ENCODE measurements at regions of chr2 and their contacts with region 1.

Region 1: GRCh38 chr2:230924470-230925341 is at the start of gene GPR55:
- DNase-seq: peak; percentile 24
- H3K4me3 Mint-ChIP-seq: peak within 1 kb of the TSS; percentile 62
- H3K27ac Mint-ChIP-seq: peak within 1 kb of the TSS; percentile 84
- H3K4me1 Mint-ChIP-seq: peaks cover 58% of the 10 kb centered on the region
- H3K27me3 Mint-ChIP-seq: peaks cover 37% of the 10 kb centered on the region
- total RNA-seq, gene GPR55: 0.13 and 0.29 TPM in 2 replicates

Region 2: DNA sequence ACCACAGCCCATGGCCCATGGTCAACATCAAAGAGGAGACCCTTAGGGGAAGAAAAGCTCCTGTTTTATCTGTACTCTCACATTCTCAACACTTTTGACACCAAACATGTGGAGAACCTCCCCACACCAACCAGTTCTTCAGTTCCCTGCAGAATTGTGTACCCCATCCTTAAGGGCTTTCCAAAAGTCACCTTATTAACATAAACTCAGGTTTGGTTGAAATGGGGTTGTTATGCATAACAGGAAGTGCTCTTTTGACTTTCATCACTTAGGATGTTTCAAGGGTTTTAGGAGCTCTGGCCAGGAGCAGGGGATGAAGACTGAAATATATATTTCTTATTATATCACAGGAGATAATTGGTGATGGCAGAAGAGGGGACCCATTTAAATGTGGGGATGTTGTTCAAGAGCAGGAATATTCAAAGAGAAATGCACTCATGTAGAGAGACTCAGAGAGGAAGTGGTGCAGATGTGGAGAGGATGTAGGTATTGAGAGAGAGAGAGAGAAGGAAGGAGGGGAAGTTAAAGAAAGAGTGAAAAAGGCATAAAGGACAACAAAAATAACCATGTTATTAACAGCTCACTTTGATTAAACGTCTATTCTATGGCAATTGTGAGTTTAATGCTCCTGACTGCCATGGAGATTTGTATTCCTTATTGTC is 562.5 kb before region 1 on chr2:
- intact Hi-C with region 1: no loop called
- DNase-seq: no peak
- H3K4me3 Mint-ChIP-seq: peak overlapping the region; percentile 5
- H3K27ac Mint-ChIP-seq: peak overlapping the region; percentile 73
- H3K4me1 Mint-ChIP-seq: peaks cover 29% of the 10 kb centered on the region
- H3K27me3 Mint-ChIP-seq: no peaks in the 10 kb centered on the region

Region 3: DNA sequence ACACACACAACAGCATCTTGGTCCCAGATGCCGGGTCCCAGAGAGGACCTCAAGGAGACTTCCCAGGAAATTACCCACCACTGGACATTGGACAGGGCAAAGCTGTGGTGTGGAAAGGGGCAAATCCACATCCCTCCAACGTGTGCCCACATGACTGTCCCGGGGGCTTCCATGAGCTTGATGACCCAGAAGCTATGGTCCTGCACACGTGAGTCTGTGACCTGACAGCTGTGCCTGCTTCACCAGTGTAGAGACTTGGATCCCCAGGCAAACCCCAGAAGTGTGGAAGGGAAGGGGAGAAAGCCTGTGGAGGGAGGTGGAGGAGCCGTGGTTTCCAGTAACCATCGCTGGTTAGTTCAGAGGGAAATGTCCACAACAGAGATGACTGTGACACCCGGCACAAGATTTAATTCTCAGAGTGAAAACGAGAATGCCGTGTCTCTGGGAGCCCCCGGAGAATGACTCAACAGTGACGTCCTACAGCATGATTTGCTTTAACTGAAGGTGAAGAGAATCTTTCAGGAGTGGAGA is 19.5 kb after region 1 on chr2:
- intact Hi-C with region 1: loop called (anchors 2 kb)
- DNase-seq: no peak
- H3K4me3 Mint-ChIP-seq: no peak overlapping the region
- H3K27ac Mint-ChIP-seq: no peak overlapping the region
- H3K4me1 Mint-ChIP-seq: peaks cover 14% of the 10 kb centered on the region
- H3K27me3 Mint-ChIP-seq: peaks cover 47% of the 10 kb centered on the region

Region 4: GRCh38 chr2:230974096-230974913 is 49.6 kb after region 1 on chr2:
- intact Hi-C with region 1: loop called (anchors 1 kb)
- DNase-seq: peak; percentile 51
- H3K4me3 Mint-ChIP-seq: peak overlapping the region; percentile 29
- H3K27ac Mint-ChIP-seq: peak overlapping the region; percentile 54
- H3K4me1 Mint-ChIP-seq: peaks cover 24% of the 10 kb centered on the region
- H3K27me3 Mint-ChIP-seq: peaks cover 35% of the 10 kb centered on the region